Left lung (tissue), 14 donors: ENCODE measurements at regions of chr12 and their contacts with region 1.

Region 1: DNA sequence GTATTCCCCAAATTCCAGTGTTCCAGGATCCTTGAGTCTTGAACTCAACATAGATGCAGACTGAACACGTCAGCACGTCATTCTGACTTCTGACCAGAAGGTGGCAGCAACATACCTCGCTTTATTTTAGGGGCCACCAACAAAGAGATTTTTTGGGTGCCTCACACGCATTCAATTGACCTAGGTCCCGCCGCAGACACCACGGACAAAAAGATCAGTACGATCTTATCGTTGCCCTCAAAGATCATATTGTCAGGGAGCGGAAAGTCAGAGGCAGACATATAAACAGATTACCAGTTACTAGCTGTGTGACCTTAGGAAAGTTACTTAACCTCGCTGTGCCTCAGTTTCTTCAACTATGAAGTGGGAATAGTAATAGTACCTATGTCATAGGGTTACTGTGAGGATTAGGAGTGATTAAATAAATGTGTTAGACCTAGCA is 6.5 kb upstream of the PRPH start:
- DNase-seq: peak in 2 of 4 donors; percentile 48 to 68
- ATAC-seq: peak; percentile 81
- H3K4me3 ChIP-seq: no peak overlapping the region
- H3K27ac ChIP-seq: no peak overlapping the region
- H3K4me1 ChIP-seq: peaks cover 0 to 8% of the 10 kb centered on the region in 2 donors
- H3K27me3 ChIP-seq: peaks cover 0 to 40% of the 10 kb centered on the region in 2 donors
- CTCF ChIP-seq: peak; percentile 80 to 87

Region 2: GRCh38 chr12:49198431-49199155 is 89.8 kb before region 1 on chr12:
- intact Hi-C with region 1: no loop called
- DNase-seq: peak in 1 of 4 donors; percentile 55
- ATAC-seq: no peak
- H3K4me3 ChIP-seq: no peak overlapping the region
- H3K27ac ChIP-seq: peak overlapping the region; percentile 3 to 20
- H3K4me1 ChIP-seq: peaks cover 5 to 52% of the 10 kb centered on the region in 2 donors
- H3K27me3 ChIP-seq: no peaks in the 10 kb centered on the region
- CTCF ChIP-seq: no peak

Region 3: DNA sequence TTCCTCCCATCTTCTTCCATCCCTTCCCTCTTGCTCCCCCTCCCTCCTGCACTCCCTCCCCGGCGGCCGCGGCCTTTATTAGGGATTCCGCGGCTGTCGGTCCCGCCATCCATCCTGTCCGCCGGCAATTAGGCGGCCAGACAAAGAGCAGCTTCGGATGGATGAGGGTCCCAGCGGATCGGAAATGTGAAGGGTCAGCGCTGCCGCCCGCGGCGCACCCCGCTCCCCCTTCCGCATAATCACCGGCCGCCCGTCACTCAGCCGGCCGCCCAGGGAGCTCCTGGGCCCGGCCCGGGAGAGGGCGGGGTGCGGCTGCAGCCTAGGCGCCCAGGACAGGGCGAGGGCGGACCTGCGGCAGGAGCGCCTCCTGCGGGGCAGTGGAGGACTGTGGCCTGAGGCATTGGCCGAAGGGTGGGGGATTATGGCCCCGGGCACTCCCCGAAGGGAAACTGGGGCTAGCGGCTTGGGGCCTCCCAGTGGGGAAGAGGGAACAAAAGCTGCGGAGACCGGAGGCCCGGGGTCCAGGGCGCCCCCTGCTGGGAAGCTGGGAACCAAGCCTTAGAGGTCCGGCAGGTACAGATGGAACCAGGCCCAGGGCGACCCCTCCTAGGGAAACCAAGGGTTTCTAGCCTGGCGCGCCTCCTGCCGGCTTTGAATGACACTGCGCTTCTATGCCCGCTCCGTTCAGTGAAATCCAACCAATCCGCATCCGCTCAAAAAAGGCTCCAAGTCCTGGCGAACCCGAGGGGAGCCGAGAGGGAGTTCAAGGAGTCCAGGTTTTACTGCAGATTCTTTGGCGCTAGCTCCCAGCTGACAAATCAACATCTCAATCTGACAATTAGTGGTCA is 53.9 kb after region 1 on chr12:
- intact Hi-C with region 1: loop called in 1 of 2 experiments (anchors 10 kb)
- DNase-seq: peak; percentile 53 to 94 (median 80)
- ATAC-seq: peak; percentile 79
- H3K4me3 ChIP-seq: peak overlapping the region; percentile 18 to 37
- H3K27ac ChIP-seq: no peak overlapping the region
- H3K4me1 ChIP-seq: peaks cover 34 to 47% of the 10 kb centered on the region in 2 donors
- H3K27me3 ChIP-seq: peaks cover 57 to 98% of the 10 kb centered on the region in 2 donors
- CTCF ChIP-seq: peak; percentile 71 to 83